Endothelial cell of umbilical vein (primary cell): ENCODE measurements at regions of chr11 and their contacts with region 1.

Region 1: DNA sequence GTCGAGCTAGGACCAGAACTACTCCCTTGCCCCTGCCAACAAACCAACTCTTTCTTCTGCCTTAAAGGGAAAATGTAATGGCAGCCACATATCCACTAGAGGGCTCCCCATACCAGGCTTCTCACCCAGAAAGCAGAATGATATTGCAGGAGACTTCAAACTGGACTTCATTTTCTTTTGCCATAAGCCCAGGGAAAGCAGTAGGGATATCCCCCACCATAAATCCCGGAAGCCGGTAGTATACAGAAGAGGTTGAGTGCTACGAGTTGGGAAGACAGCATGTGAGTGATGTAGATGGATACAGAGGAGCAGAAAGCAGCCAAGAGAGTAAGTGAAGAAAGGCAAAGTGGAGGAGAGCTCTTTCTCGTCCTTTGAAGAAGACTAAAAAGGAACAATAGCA is 12.1 kb downstream of the PLAAT5 start:
- DNase-seq: peak; percentile 79
- H3K4me3 ChIP-seq: no peak overlapping the region
- H3K27ac ChIP-seq: no peak overlapping the region
- H3K4me1 ChIP-seq: no peaks in the 10 kb centered on the region
- H3K27me3 ChIP-seq: peaks cover 2 to 20% of the 10 kb centered on the region in 2 experiments
- CTCF ChIP-seq: peak; percentile 80 to 84
- POLR2A ChIP-seq: no peak

Region 2: DNA sequence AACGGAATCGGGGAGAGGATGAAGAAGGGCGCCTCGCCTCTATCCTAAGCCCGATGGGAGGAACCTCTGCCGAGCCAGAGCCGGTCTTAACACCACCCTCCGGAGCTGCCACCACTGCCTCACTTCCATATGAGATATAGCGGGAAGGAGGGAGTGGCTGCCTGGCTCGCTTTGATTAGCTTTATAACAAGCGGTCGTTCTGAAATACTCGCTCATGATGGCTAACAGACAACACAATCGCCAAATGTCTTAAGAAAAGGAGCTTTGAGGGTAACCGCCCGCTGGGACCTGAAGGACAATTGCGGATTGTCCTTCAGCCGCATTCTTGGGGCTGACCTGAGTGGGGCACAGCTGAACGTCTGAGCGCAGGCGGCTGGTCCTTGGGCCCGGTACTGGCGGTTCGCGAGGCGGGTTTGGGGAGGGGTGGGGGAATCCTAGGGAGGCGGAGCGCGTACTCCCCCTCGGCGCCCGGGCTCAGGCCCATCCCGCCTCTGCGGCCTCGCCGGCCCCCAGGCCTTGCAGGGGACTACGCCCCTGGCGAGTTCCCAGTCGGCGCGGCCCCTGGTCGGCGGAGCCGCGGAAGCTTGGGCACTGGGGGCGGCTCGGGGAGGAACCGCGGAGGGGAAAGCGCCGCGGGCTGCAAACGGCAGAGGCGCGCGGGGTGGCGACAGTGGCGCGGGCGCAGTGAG is 11.8 kb after region 1 on chr11 and contains the start of gene PLAAT5:
- CTCF ChIA-PET with region 1: interaction called, 18 read pairs
- POLR2A ChIA-PET with region 1: no interaction called
- dilution Hi-C with region 1: no loop called
- intact Hi-C with region 1: no loop called
- DNase-seq: no peak
- H3K4me3 ChIP-seq: peak within 1 kb of the TSS; percentile 12 to 29 (median 23)
- H3K27ac ChIP-seq: no peak within 1 kb of the TSS
- H3K4me1 ChIP-seq: peaks cover 3% of the 10 kb centered on the region
- H3K27me3 ChIP-seq: peaks cover 40 to 55% of the 10 kb centered on the region in 2 experiments
- CTCF ChIP-seq: no peak
- POLR2A ChIP-seq: no peak
- total RNA-seq, gene PLAAT5: not detected in 2 replicates

Region 3: DNA sequence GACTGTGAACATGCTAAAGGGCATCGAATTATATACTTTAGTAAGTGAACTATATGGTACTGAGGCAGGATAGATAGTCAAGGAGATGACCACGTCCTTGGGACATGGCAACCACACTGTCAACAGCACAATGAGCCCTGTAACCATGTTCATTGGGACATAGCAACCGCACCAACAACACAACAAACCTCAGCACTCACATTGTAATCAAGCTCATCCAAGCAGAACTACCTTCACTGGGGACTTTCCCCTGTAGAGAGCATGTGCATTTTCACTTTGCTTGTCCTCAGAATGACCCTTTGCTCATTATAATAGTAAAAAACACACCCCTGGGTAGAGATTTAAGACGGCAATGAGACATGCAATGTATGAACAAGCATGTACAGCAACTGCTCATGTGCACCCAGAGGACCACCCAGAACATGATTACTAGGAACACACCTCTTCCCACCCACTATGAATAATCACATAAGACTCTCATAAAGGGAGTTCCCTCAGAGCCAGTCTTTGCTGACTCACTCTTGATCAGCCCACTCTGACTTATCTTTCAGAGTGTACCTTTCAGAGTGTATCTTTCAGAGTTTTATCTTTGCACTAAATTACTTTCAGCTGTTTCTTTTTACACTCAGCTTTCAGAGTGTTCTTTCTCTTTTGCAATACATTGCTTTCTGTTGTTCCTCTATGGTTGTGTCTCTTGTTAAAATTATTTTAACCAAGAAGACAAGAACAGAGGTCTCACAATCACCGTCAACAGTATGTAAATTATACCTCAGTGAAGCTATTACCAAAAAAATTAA is 88.3 kb after region 1 on chr11:
- CTCF ChIA-PET with region 1: no interaction called
- POLR2A ChIA-PET with region 1: no interaction called
- dilution Hi-C with region 1: no loop called
- intact Hi-C with region 1: no loop called
- DNase-seq: peak; percentile 41
- H3K4me3 ChIP-seq: no peak overlapping the region
- H3K27ac ChIP-seq: no peak overlapping the region
- H3K4me1 ChIP-seq: peaks cover 3% of the 10 kb centered on the region
- H3K27me3 ChIP-seq: peaks cover 0 to 6% of the 10 kb centered on the region in 2 experiments
- CTCF ChIP-seq: no peak
- POLR2A ChIP-seq: no peak

Region 4: GRCh38 chr11:63592975-63593395 is 114.1 kb after region 1 on chr11:
- CTCF ChIA-PET with region 1: interaction called, 17 read pairs
- POLR2A ChIA-PET with region 1: no interaction called
- dilution Hi-C with region 1: no loop called
- intact Hi-C with region 1: no loop called
- DNase-seq: no peak
- H3K4me3 ChIP-seq: no peak overlapping the region
- H3K27ac ChIP-seq: no peak overlapping the region
- H3K4me1 ChIP-seq: no peaks in the 10 kb centered on the region
- H3K27me3 ChIP-seq: no peaks in the 10 kb centered on the region
- CTCF ChIP-seq: peak; percentile 30 to 44
- POLR2A ChIP-seq: no peak

Region 5: DNA sequence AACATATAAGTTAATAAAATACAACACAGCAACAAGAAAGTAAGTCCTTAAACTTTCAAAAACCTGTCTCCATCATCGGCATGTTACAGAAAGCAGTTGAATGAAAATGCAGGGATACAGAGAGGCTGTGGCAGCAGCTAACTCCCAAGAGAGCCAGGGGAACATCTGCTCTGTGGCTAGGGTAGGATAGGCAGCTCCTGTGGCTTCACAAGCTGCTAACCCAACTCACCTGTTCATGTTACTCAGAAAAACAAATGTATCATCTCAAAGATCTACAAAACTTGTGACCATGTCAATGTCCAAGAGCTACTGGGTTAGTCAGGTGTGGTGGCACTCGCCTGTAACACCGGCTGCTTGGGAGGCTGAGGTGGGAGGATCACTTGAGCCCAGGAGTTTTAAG is 150.5 kb after region 1 on chr11:
- CTCF ChIA-PET with region 1: interaction called, 36 read pairs
- POLR2A ChIA-PET with region 1: no interaction called
- dilution Hi-C with region 1: no loop called
- intact Hi-C with region 1: no loop called
- DNase-seq: no peak
- H3K4me3 ChIP-seq: no peak overlapping the region
- H3K27ac ChIP-seq: no peak overlapping the region
- H3K4me1 ChIP-seq: no peaks in the 10 kb centered on the region
- H3K27me3 ChIP-seq: no peaks in the 10 kb centered on the region
- CTCF ChIP-seq: no peak
- POLR2A ChIP-seq: no peak

Region 6: GRCh38 chr11:63738720-63739360 is 259.9 kb after region 1 on chr11:
- CTCF ChIA-PET with region 1: interaction called, 33 read pairs
- POLR2A ChIA-PET with region 1: no interaction called
- dilution Hi-C with region 1: no loop called
- intact Hi-C with region 1: loop called (anchors 1 kb)
- DNase-seq: peak; percentile 89
- H3K4me3 ChIP-seq: no peak overlapping the region
- H3K27ac ChIP-seq: no peak overlapping the region
- H3K4me1 ChIP-seq: no peaks in the 10 kb centered on the region
- H3K27me3 ChIP-seq: no peaks in the 10 kb centered on the region
- CTCF ChIP-seq: peak; percentile 67 to 75
- POLR2A ChIP-seq: no peak